OCI-LY7 (cell line): ENCODE measurements at regions of chr6 and their contacts with region 1.

Region 1: DNA sequence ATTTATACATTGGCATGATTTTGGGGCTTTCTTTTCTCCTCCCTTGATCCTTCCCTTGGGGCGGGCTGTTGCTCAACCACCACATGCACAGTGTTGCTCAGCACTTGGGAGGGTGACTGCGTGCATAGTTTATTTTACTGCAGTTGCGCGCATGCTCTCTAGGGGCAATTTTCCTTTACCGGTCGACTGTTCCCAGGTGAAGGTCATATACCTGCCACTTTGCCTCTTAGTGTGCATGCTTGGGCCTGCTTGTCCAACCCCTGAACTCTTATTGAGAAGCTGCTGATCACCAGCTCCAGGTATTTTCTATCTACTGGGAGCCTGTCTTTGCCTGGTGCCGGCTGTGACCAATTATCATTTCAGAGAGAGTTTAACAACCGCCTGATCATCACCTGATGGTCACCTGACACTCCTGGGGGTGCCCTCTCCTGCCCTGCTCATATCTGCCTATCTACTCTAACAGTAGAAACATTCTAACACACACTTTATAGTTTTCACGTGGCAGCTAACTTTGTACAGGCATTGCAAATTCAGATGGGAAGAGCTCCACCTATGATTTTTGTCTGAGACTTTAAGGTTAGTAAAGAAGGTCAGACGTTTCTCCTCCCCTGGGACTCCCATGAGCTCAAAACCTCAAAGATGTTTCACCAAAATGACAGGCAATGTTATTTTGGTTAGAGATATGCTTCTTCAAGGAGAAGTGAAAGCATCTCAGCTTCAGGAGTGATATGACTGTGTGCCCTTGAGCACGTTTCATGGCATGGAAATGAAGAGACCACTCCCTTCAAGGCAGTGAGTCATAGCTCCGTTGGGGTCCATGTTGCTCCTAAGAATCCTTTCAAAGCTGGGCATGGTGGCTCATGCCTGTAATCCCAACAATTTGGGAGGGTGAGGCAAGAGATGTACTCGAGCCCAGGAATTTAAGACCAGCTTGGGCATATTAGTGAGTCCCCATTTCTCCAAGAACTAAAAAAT is 227.5 kb upstream of the MYLIP start:
- DNase-seq: peak; percentile 90
- H3K4me3 ChIP-seq: peak overlapping the region; percentile 32
- H3K27ac ChIP-seq: peak overlapping the region; percentile 83
- H3K4me1 ChIP-seq: peaks cover 71% of the 10 kb centered on the region
- CTCF ChIP-seq: no peak; the same call in 1 of the 2 replicates

Region 2: DNA sequence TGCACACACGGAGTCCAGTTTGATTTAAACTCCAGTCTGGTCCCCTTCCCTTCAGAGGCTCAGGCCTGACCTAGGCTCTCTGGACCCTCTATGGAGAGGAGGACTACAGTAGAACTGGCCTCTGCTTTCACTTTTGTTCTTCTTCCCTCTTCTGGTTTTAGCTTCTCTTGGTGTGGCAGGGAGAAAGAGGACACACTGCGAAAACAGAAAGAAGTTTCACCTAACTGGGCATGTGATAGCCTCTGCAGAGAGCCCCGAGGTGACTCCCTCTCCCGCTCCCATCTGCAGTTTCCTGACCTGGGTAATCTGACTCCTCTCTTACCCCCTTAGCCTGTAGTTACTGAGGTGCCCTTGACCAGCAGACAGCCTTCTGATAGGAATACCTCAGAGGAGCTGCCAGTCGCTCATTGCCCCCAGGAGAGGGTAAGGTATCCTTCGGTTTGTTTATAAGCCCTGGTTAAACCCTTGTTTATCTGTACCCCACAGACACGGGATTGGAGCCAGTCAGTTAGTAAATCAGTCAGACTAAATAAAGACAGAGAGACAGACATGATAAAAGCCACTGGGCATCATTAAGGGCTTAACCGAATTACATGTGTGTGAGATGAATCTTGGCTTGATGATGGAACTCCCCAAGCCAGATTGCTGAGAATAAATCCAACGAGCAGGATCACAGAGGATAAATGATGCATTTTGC is 226.6 kb before region 1 on chr6:
- CTCF ChIA-PET with region 1: no interaction called
- POLR2A ChIA-PET with region 1: no interaction called
- intact Hi-C with region 1: no loop called
- DNase-seq: no peak
- H3K4me3 ChIP-seq: no peak overlapping the region
- H3K27ac ChIP-seq: no peak overlapping the region
- H3K4me1 ChIP-seq: no peaks in the 10 kb centered on the region
- CTCF ChIP-seq: no peak

Region 3: GRCh38 chr6:15854826-15855710 is 46.4 kb before region 1 on chr6:
- CTCF ChIA-PET with region 1: no interaction called
- POLR2A ChIA-PET with region 1: no interaction called
- intact Hi-C with region 1: no loop called
- DNase-seq: no peak
- H3K4me3 ChIP-seq: no peak overlapping the region
- H3K27ac ChIP-seq: no peak overlapping the region
- H3K4me1 ChIP-seq: no peaks in the 10 kb centered on the region
- CTCF ChIP-seq: no peak

Region 4: DNA sequence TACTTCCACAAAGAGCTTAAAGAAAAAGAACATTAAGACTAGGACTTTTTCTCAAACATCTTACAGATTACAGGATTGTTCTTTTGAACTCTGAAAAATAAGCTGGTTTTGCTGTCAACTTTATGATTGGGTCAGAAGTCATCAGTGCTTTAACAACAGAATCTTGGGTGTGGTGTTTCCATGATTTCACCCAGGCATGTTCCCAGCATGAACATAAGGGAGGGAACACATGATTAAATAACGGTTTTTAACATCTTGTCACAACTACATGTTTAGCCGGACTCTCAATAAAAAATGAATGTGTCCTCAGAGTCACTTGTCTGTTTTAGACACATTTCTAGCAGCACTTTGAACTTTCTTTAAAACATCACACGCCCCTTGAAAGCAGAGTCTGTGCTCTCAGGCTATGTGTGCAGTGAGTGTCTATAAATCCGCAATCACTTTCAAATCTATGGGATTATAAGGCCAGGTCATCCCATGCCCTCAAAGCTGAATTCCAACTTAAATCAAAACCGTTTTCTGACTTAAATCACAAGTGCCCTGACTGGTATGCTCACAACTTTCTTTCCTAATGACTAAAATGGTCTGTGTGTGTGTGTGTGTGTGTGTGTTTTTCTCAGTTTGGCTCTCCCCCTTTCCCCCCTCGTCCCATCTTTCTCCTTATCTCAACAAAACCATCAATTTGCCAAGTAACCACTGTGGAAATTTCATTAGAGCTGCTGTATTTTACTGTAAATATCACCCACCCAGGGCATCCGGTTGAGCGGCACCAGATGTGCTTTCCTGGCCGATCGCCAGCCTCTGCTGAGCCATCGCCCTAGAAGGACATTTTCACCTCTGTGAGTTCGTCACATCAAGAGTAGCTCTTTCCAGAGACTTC is 21.8 kb before region 1 on chr6:
- CTCF ChIA-PET with region 1: interaction called, 3 read pairs
- POLR2A ChIA-PET with region 1: interaction called, 15 read pairs
- intact Hi-C with region 1: no loop called
- DNase-seq: peak; percentile 31
- H3K4me3 ChIP-seq: no peak overlapping the region
- H3K27ac ChIP-seq: no peak overlapping the region
- H3K4me1 ChIP-seq: peaks cover 8% of the 10 kb centered on the region
- CTCF ChIP-seq: no peak

Region 5: GRCh38 chr6:15887491-15888461 is 13.7 kb before region 1 on chr6:
- CTCF ChIA-PET with region 1: interaction called, 4 read pairs
- POLR2A ChIA-PET with region 1: interaction called, 26 read pairs
- intact Hi-C with region 1: no loop called
- DNase-seq: peak; percentile 61
- H3K4me3 ChIP-seq: no peak overlapping the region
- H3K27ac ChIP-seq: peak overlapping the region; percentile 34
- H3K4me1 ChIP-seq: peaks cover 13% of the 10 kb centered on the region
- CTCF ChIP-seq: no peak

Region 6: DNA sequence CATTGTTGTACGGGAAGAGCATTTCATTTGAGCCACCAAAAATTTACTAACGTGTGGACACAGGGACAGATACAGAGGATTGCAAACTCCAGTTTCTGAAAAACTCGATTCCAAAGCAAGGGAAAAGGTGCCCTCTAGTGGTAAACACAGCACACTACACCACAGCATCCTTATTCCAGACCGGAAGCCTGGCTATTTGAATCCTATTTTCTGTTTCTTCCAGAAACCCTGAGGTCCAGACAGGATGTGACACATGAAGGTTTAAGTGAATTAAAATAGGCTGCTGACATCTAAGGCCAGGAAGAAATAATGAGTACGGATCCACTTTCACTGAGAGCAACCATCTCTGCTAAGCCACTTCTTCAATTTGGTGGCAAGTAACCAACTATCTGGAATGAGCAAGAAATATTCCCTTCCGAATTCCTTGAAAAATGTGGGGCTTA is 305.2 kb after region 1 on chr6:
- CTCF ChIA-PET with region 1: no interaction called
- POLR2A ChIA-PET with region 1: interaction called, 7 read pairs
- intact Hi-C with region 1: loop called (anchors 5 kb)
- DNase-seq: peak; percentile 75
- H3K4me3 ChIP-seq: peak overlapping the region; percentile 27
- H3K27ac ChIP-seq: peak overlapping the region; percentile 87
- H3K4me1 ChIP-seq: peaks cover 28% of the 10 kb centered on the region
- CTCF ChIP-seq: peak; percentile 99